RWPE1 (cell line): ENCODE measurements at regions of chr20 and their contacts with region 1.

Region 1: DNA sequence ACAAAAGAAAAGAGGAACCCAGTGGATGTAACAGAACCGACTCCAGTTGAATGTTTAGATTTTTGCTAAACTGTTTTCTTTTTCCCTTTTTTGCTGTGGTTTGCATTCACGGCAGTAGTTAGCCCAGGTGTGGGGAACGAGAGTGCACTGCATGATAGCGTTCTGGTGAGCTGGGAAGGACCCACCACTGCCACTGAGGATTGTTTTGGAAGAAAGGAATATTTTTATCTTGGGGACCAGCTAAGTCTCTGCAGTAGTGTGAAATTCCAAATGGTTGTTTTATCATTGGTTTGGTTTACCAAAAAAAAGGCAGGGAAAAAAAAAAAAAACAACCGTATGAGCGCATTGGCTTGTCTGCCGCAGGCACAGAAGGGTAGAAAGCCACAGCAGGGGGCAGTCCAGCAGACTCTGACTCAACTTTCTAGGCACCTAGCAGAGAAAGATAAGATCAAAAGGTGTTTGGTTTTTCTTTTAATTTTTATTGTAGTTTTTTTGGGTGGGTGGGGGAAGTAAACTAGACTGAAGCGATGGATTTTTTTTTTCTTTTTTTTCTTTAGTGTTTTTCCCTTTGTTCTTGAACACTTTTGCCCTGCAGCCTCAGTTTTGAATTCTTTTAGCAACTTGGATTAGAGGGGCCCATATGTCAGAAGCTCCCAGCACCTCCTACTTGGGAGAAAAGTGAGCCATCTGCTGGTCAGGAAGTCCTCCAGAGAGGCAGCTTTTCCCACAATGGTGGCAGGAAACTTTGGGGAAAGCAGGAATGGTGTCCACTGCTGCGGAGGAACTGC is 13.5 kb upstream of the RAB5IF start:
- DNase-seq: no peak
- H3K27ac ChIP-seq: peak overlapping the region; percentile 24
- CTCF ChIP-seq: peak; percentile 81

Region 2: GRCh38 chr20:36579996-36580545 is 12.0 kb before region 1 on chr20:
- CTCF ChIA-PET with region 1: interaction called, 12 read pairs
- POLR2A ChIA-PET with region 1: no interaction called
- DNase-seq: no peak
- H3K27ac ChIP-seq: no peak overlapping the region
- CTCF ChIP-seq: no peak

Region 3: DNA sequence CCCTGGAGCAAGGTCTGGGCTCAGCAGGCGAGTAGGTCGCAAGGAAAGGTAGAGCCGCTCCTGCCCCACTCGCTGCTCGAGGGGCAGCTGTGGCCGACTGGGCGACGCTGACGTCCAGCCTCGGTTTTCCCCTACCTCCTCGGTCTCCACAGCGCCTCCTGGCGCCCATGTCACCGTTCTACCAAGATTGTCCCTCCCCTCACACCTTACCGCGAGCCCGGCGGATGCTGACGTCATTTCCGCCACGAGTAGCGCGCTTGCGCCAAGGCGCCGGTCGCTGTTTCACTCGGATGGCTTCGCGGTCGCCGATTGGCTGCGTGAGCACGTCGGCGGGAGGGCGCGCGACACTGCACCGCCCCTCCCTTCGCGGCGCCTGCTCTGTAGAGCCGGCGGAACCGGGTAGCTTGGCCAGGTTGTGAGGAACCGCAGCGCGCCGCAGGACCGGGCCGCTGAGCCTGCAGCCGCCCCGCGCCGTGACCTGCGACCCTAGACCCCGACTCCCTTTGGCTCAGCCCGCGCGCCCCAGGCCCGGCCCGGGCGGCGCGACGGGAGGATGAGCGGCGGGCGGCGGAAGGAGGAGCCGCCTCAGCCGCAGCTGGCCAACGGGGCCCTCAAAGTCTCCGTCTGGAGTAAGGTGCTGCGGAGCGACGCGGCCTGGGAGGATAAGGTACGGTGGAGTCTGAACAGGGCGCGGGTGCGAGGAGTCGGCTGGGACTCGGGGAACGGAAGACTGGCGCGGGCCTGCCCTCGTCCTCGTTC is 13.5 kb after region 1 on chr20 and contains the start of gene RAB5IF:
- CTCF ChIA-PET with region 1: interaction called, 12 read pairs
- POLR2A ChIA-PET with region 1: no interaction called
- DNase-seq: peak; percentile 99
- H3K27ac ChIP-seq: peak within 1 kb of the TSS; percentile 80
- CTCF ChIP-seq: peak; percentile 99